ENCODE measurements at regions of chr2 and their contacts with region 1.

Region 1: DNA sequence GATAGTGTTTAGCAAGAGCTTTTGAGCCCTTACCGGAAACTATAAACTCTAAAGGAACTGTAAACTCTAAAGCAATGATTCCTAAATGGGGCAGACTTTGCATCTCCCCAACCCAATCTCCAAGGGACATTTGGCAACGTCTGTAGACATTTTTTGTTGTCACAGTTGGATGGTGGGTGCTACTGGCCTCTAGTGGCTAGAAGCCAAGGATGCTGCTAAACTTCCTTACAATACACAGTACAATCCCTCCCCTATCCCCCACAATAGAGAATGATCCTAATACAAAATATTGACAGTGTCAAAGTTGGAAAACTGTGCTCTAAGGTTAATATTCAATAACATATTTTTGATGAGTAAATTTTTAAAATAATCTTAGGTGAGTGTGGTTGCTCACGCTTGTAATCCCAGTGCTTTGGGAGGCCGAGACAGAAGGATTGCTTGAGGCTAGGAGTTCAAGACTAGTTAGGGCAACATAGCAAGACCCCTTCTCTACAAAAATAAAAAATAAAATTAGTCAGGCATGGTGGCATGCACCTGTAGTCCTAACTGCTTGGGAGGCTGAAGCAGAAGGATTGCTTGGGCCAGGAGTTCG is 66.7 kb downstream of the PTPN4 start:
- DNase-seq: peak; percentile 59
- ATAC-seq: peak; percentile 56
- H3K4me3 Mint-ChIP-seq: no peak overlapping the region
- H3K27ac Mint-ChIP-seq: no peak overlapping the region
- H3K4me1 Mint-ChIP-seq: peaks cover 35% of the 10 kb centered on the region
- H3K27me3 Mint-ChIP-seq: no peaks in the 10 kb centered on the region

Region 2: DNA sequence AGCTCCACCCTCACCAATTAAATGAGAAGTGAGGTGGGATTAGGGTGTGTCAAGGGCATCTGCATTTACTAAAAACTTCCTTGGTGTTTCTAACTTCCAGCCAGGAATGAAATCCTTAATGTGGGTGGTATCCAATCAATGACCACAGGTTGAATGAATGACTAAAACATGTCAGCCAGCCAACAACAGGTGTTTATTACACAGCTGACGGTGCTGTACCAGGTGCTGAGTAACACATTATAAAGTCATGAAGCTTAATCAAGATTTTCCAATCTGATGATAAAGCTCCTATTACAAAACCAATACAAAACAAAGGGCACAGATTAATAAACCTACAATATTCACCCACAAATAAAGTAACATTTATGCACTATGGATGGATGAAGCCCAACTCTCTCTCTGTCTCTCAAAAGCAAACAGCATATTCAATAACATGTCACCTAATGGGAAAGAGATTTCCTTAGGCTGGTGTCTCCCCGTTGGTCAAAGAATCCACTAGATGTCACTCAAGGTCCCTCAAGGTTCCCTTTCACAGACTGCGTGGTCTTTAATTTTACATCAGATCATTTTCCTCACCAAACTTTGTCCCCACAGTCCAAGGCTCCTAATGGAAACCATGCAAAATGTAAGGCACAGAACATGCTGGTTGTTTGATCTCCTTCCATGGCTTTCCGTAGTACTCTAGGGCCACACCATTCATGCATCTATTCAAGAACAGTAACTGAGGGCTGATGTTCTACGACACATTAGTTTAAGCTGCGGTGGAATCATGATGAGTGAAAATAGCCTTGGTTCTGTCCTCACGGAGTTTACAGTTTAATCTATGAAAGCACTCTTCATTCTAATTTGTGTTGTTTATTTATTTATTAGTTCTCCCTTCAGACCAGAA is 73.2 kb before region 1 on chr2:
- CTCF ChIA-PET with region 1: interaction called, 16 read pairs
- DNase-seq: peak; percentile 50
- ATAC-seq: peak; percentile 77
- H3K4me3 Mint-ChIP-seq: no peak overlapping the region
- H3K27ac Mint-ChIP-seq: no peak overlapping the region
- H3K4me1 Mint-ChIP-seq: peaks cover 12% of the 10 kb centered on the region
- H3K27me3 Mint-ChIP-seq: peaks cover 4% of the 10 kb centered on the region

Region 3: GRCh38 chr2:119759451-119760236 is 66.8 kb before region 1 on chr2 and contains the start of gene PTPN4:
- CTCF ChIA-PET with region 1: interaction called, 11 read pairs
- DNase-seq: peak; percentile 99
- ATAC-seq: peak; percentile 95
- H3K4me3 Mint-ChIP-seq: peak within 1 kb of the TSS; percentile 91
- H3K27ac Mint-ChIP-seq: peak within 1 kb of the TSS; percentile 94
- H3K4me1 Mint-ChIP-seq: peaks cover 41% of the 10 kb centered on the region
- H3K27me3 Mint-ChIP-seq: no peaks in the 10 kb centered on the region
- total RNA-seq, gene PTPN4: 76.4 to 92.2 TPM